ENCODE measurements at regions of chr5 and their contacts with region 1.

Region 1: DNA sequence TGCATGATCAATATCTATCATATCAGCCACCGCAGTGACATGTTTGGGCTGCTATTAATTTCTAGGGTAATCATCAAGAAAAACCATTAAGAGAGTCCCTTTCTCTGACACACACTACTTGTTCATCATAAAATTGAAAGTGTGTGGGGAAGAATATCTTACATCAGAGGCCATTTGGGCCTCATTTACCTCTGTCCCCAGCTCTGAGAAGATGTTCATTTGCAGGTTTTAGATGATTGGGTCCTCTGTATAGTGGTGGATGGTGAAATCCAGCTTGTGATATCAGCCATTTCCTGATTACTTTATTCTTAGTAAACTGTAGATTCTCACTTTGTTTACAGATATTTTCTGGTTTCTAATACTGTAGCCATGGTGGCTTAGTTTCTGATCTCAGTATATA is 29.8 kb upstream of the PJA2 start:
- DNase-seq: no peak
- ATAC-seq: no peak
- H3K4me3 ChIP-seq: no peak overlapping the region
- H3K4me3 Mint-ChIP-seq: no peak overlapping the region
- H3K27ac ChIP-seq: no peak overlapping the region
- H3K27ac Mint-ChIP-seq: no peak overlapping the region
- H3K4me1 ChIP-seq: no peaks in the 10 kb centered on the region
- H3K4me1 Mint-ChIP-seq: no peaks in the 10 kb centered on the region
- H3K27me3 ChIP-seq: no peaks in the 10 kb centered on the region
- H3K27me3 Mint-ChIP-seq: no peaks in the 10 kb centered on the region
- CTCF ChIP-seq: no peak

Region 2: DNA sequence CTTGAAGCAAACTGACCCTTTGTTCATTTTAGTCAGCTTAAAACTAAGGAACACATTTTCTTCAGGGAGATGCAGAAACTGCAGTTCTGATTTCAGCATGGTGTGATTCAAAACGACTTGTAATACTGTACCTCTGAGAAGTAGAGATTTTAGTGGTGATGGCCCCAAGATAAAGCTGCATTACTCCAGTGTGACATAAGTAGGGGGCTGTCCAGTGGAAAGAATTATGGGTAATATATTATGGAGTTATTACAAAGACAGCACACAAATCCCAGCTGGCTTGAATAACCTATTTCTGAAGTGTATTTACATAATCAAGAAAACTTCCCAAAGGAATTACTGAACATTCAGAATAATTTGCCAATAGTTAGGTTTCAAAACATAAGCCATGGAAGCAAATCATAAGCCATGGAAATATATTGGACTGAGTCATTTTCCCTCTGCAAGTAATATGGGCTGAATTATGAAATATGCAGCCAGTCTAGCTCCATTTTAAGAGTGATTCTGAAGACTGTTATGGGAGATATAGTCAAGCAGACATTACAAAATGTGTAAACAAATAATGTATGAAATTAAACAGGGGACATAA is 924.0 kb before region 1 on chr5:
- CTCF ChIA-PET with region 1: no interaction called
- POLR2A ChIA-PET with region 1: no interaction called
- intact Hi-C with region 1: loop called (anchors 2 to 5 kb)
- DNase-seq: no peak
- ATAC-seq: no peak
- H3K4me3 ChIP-seq: no peak overlapping the region
- H3K4me3 Mint-ChIP-seq: no peak overlapping the region
- H3K27ac ChIP-seq: no peak overlapping the region
- H3K27ac Mint-ChIP-seq: no peak overlapping the region
- H3K4me1 ChIP-seq: no peaks in the 10 kb centered on the region
- H3K4me1 Mint-ChIP-seq: no peaks in the 10 kb centered on the region
- H3K27me3 ChIP-seq: peaks cover 0 to 4% of the 10 kb centered on the region in 2 experiments
- H3K27me3 Mint-ChIP-seq: peaks cover 38% of the 10 kb centered on the region
- CTCF ChIP-seq: no peak

Region 3: GRCh38 chr5:108642167-108642906 is 797.3 kb before region 1 on chr5:
- CTCF ChIA-PET with region 1: no interaction called
- POLR2A ChIA-PET with region 1: no interaction called
- intact Hi-C with region 1: loop called in 1 of 2 experiments (anchors 2 kb)
- DNase-seq: peak; percentile 16 to 69 (median 32)
- ATAC-seq: peak; percentile 71
- H3K4me3 ChIP-seq: no peak overlapping the region
- H3K4me3 Mint-ChIP-seq: no peak overlapping the region
- H3K27ac ChIP-seq: no peak overlapping the region
- H3K27ac Mint-ChIP-seq: no peak overlapping the region
- H3K4me1 ChIP-seq: no peaks in the 10 kb centered on the region
- H3K4me1 Mint-ChIP-seq: no peaks in the 10 kb centered on the region
- H3K27me3 ChIP-seq: no peaks in the 10 kb centered on the region
- H3K27me3 Mint-ChIP-seq: peaks cover 8% of the 10 kb centered on the region
- CTCF ChIP-seq: peak; percentile 79

Region 4: DNA sequence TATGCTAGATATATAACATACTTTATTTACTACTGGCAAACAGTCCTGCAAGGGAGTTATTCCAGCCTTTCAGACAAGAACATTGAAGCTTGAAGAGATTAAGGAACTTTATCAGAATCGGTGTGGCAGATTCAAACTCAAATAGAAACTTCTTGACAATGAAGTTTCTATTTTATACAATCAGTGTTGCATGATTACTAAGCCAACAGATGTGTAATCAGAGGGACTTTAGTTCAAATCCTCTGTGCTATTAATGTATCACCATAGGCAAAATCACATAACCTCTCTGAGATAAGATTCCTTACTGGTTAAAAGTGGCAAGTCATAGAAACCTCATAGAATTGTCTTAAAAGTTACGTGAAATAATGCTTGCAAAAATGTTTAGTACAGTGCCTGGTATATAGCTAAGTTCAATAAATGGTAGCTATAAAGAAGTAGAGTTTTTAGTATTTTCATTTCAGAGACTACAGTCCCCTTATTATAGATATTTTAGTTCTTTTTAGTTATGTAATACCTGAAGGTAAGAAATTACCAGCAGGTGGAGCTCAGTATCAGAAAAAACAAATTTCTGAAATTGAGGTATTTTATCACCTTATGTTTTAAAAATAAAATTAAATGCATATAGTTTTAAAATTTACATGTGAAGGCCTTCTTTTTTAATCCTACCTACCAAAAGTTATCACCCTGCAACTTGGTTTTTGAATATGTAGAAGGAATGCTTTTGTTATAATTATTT is 519.8 kb before region 1 on chr5:
- CTCF ChIA-PET with region 1: no interaction called
- POLR2A ChIA-PET with region 1: no interaction called
- intact Hi-C with region 1: loop called (anchors 5 to 10 kb)
- DNase-seq: peak in 2 of 14 experiments; percentile 6 to 8
- ATAC-seq: no peak
- H3K4me3 ChIP-seq: no peak overlapping the region
- H3K4me3 Mint-ChIP-seq: no peak overlapping the region
- H3K27ac ChIP-seq: no peak overlapping the region
- H3K27ac Mint-ChIP-seq: no peak overlapping the region
- H3K4me1 ChIP-seq: no peaks in the 10 kb centered on the region
- H3K4me1 Mint-ChIP-seq: peaks cover 6% of the 10 kb centered on the region
- H3K27me3 ChIP-seq: no peaks in the 10 kb centered on the region
- H3K27me3 Mint-ChIP-seq: no peaks in the 10 kb centered on the region
- CTCF ChIP-seq: peak; percentile 51

Region 5: GRCh38 chr5:109099081-109099480 is 340.5 kb before region 1 on chr5:
- CTCF ChIA-PET with region 1: no interaction called
- POLR2A ChIA-PET with region 1: no interaction called
- intact Hi-C with region 1: no loop called
- DNase-seq: no peak
- ATAC-seq: no peak
- H3K4me3 ChIP-seq: no peak overlapping the region
- H3K4me3 Mint-ChIP-seq: no peak overlapping the region
- H3K27ac ChIP-seq: no peak overlapping the region
- H3K27ac Mint-ChIP-seq: no peak overlapping the region
- H3K4me1 ChIP-seq: no peaks in the 10 kb centered on the region
- H3K4me1 Mint-ChIP-seq: no peaks in the 10 kb centered on the region
- H3K27me3 ChIP-seq: no peaks in the 10 kb centered on the region
- H3K27me3 Mint-ChIP-seq: no peaks in the 10 kb centered on the region
- CTCF ChIP-seq: no peak

Region 6: DNA sequence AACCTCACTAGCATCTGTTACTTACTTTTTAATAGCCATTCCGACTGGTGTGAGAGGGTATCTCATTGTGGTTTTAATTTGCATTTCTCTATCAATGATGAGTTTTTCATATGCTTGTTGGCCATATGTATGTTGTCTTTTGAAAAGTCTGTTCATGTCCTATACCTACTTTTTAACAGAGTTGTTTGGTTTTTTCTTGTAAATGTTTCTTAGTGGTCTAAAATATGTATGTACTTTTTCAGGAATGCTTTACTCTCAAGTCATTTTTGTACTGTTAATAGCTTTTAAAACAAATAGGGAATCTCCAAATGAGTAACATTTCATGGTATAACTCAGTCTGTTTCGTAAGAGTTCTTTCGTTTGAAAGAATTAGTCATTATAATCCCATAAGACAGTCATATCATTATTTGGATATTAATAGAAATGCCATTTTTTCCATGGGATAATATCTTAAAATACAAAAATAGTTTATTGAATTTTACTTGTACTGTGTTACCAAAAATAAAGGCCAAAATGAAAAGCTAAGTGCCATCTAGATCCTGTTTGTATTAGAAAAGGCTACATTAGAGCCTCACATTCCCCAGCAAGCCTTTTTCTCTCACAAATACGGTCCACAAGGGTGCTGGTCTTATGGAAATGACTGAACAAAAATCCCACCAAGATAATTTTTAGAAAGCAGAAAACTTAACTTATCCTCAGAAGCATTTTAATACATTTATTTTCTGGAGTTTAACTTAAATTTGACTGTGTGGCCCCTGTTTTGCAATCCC is 277.5 kb before region 1 on chr5:
- CTCF ChIA-PET with region 1: no interaction called
- POLR2A ChIA-PET with region 1: no interaction called
- intact Hi-C with region 1: no loop called
- DNase-seq: no peak
- ATAC-seq: no peak
- H3K4me3 ChIP-seq: no peak overlapping the region
- H3K4me3 Mint-ChIP-seq: no peak overlapping the region
- H3K27ac ChIP-seq: no peak overlapping the region
- H3K27ac Mint-ChIP-seq: no peak overlapping the region
- H3K4me1 ChIP-seq: no peaks in the 10 kb centered on the region
- H3K4me1 Mint-ChIP-seq: no peaks in the 10 kb centered on the region
- H3K27me3 ChIP-seq: no peaks in the 10 kb centered on the region
- H3K27me3 Mint-ChIP-seq: no peaks in the 10 kb centered on the region
- CTCF ChIP-seq: no peak

Region 7: GRCh38 chr5:109374625-109375024 is 65.0 kb before region 1 on chr5:
- CTCF ChIA-PET with region 1: no interaction called
- POLR2A ChIA-PET with region 1: no interaction called
- intact Hi-C with region 1: loop called (anchors 2 to 5 kb)
- DNase-seq: peak in 2 of 14 experiments; percentile 20 to 25
- ATAC-seq: peak; percentile 34
- H3K4me3 ChIP-seq: no peak overlapping the region
- H3K4me3 Mint-ChIP-seq: no peak overlapping the region
- H3K27ac ChIP-seq: no peak overlapping the region
- H3K27ac Mint-ChIP-seq: no peak overlapping the region
- H3K4me1 ChIP-seq: no peaks in the 10 kb centered on the region
- H3K4me1 Mint-ChIP-seq: peaks cover 58% of the 10 kb centered on the region
- H3K27me3 ChIP-seq: no peaks in the 10 kb centered on the region
- H3K27me3 Mint-ChIP-seq: no peaks in the 10 kb centered on the region
- CTCF ChIP-seq: no peak

Region 8: DNA sequence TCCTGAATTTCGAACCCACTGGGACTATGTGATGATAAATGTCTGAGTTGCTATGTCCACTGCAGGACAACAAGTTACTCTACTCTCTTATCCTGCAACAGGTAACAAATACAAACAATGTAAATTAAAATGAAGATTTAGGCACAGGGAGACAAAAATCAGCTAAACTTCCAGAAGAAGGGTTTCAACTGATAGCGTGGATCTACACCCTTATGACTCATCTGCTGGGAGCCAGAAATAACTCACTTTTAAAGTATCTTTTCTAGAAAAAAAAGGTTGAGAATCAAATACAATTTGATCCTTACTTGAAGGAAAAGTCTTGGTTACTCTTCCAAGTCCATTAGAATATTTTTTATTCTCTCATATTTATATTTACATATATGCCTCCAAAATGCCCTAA is 51.2 kb before region 1 on chr5:
- CTCF ChIA-PET with region 1: no interaction called
- POLR2A ChIA-PET with region 1: no interaction called
- intact Hi-C with region 1: no loop called
- DNase-seq: no peak
- ATAC-seq: no peak
- H3K4me3 ChIP-seq: no peak overlapping the region
- H3K4me3 Mint-ChIP-seq: no peak overlapping the region
- H3K27ac ChIP-seq: no peak overlapping the region
- H3K27ac Mint-ChIP-seq: no peak overlapping the region
- H3K4me1 ChIP-seq: peaks cover 4% of the 10 kb centered on the region
- H3K4me1 Mint-ChIP-seq: peaks cover 90% of the 10 kb centered on the region
- H3K27me3 ChIP-seq: no peaks in the 10 kb centered on the region
- H3K27me3 Mint-ChIP-seq: no peaks in the 10 kb centered on the region
- CTCF ChIP-seq: no peak